Activated T-helper 2 cell treated with anti-CD3 and anti-CD28 coated beads, Interferon-gamma antibody, Interleukin-2, Interleukin-4, amounts not matched to agents 10 μg/mL and 5 μg/mL and 100 μg/mL, durations not matched to agents 14 hours and 24 hours and 36 hours (primary cell): ENCODE measurements at regions of chrX and their contacts with region 1.

Region 1: DNA sequence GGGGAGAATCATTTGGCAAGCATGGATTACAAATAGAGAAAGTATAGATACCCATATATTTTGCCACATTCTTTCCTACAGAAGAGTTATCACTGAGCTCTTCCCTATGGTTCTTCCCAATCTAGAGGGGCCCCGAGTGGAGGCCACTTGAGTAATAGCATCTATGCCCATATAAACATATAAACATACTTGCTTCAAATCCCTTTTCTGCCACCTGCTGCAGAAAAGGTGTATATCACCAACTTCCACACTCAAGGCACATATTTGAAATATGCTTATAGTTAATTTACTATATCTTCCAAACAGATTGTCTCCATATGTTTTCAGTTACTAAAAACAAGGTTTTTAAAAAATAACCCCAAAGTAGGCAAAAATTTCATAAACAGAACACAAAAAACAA is 642.8 kb upstream of the DIPK2B start:
- DNase-seq: no peak
- H3K4me3 Mint-ChIP-seq: peak overlapping the region; percentile 47
- H3K27ac Mint-ChIP-seq: peak overlapping the region; percentile 91
- H3K4me1 Mint-ChIP-seq: peaks cover 41% of the 10 kb centered on the region
- H3K27me3 Mint-ChIP-seq: no peaks in the 10 kb centered on the region

Region 2: GRCh38 chrX:45801554-45801953 is 42.0 kb before region 1 on chrX:
- intact Hi-C with region 1: loop called (anchors 2 kb)
- DNase-seq: no peak
- H3K4me3 Mint-ChIP-seq: peak overlapping the region; percentile 26
- H3K27ac Mint-ChIP-seq: peak overlapping the region; percentile 83
- H3K4me1 Mint-ChIP-seq: peaks cover 62% of the 10 kb centered on the region
- H3K27me3 Mint-ChIP-seq: no peaks in the 10 kb centered on the region

Region 3: DNA sequence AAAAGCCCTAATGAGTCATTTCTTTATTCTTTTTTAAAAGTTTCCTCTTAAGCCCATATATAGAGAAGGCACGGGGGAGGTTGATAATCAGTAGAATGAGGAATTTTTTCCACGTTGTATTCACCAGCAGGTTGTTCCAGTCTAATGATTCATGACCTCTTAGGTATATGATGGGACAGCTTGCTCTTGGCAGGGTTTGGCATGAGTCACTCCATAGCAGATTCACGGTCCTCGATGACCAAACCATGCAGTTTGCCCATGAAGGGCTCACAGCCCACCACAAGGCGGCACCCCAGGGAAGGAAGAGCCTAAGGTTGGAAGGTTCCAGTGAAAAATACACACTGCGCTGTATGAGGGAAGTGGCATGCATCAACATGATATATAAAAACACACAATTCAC is 19.0 kb before region 1 on chrX:
- intact Hi-C with region 1: loop called (anchors 2 kb)
- DNase-seq: no peak
- H3K4me3 Mint-ChIP-seq: no peak overlapping the region
- H3K27ac Mint-ChIP-seq: peak overlapping the region; percentile 88
- H3K4me1 Mint-ChIP-seq: peaks cover 26% of the 10 kb centered on the region
- H3K27me3 Mint-ChIP-seq: no peaks in the 10 kb centered on the region